ENCODE measurements at regions of chrX and their contacts with region 1.

Region 1: GRCh38 chrX:10119399-10119990 is 37.3 kb upstream of the CLCN4 start:
- DNase-seq: peak; percentile 74
- CTCF ChIP-seq: peak; percentile 95

Region 2: GRCh38 chrX:9758021-9758638 is 361.4 kb before region 1 on chrX:
- in situ Hi-C with region 1: no loop called
- DNase-seq: no peak
- CTCF ChIP-seq: no peak

Region 3: DNA sequence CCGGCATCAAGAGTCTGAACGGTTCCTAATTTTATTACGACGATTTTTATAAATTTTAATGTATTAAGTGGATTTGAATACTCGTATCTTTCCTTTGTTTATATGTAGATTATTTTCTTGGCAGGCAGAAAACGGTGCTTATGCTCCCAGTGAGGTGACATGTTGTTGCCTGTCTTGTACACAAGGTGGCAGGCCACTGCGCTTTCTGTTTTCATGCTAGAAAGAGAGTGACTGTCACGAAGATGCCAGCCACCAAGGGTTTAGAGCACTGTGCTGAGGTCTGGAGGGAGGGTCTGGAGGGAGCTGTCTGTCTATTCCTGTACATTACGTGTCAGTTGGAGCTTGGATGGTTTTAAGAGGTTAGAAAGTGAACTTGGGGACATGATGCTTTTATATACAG is 245.5 kb before region 1 on chrX:
- in situ Hi-C with region 1: loop called (anchors 10 kb)
- DNase-seq: peak; percentile 67
- CTCF ChIP-seq: peak; percentile 72

Region 4: DNA sequence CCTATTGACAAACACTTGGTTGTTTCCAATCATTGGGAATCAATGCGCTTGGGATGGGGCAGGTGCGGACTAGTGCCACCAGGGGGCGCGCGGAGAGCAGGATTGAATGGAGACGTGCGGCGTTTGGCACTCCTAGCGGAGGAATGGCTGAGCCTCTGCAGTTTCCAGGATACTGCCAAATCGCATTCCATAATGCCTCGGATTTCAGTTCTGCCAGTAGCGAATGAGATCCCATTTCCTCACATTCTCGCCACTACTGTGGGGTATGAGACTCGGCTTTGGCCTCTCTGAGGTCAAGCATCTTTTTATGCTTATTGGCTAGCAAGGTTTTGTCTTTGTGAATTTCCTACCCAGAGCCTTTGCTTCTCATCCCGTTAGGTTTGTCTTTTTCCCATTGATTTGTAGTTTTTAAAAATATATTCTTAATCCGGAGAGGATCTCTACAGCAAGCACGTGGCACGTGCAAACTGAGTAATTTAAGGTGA is 123.6 kb before region 1 on chrX:
- in situ Hi-C with region 1: loop called (anchors 10 kb)
- DNase-seq: peak; percentile 79
- CTCF ChIP-seq: peak; percentile 97

Measured in GM13977 (cell line).